Transverse colon (tissue), 4 donors: ENCODE measurements at regions of chr7 and their contacts with region 1.

Region 1: GRCh38 chr7:135558337-135558767 is 635 bp downstream of the NUP205 start:
- DNase-seq: peak; percentile 59
- H3K4me3 ChIP-seq: peak overlapping the region; percentile 63 to 80 (median 75)
- H3K27ac ChIP-seq: peak overlapping the region; percentile 91 to 93 (median 92)
- H3K4me1 ChIP-seq: peaks cover 0 to 20% (median 7%) of the 10 kb centered on the region in 4 donors
- H3K27me3 ChIP-seq: no peaks in the 10 kb centered on the region
- CTCF ChIP-seq: peak; percentile 33 to 41 (median 38)
- EP300 ChIP-seq: no peak
- POLR2A ChIP-seq: no peak

Region 2: DNA sequence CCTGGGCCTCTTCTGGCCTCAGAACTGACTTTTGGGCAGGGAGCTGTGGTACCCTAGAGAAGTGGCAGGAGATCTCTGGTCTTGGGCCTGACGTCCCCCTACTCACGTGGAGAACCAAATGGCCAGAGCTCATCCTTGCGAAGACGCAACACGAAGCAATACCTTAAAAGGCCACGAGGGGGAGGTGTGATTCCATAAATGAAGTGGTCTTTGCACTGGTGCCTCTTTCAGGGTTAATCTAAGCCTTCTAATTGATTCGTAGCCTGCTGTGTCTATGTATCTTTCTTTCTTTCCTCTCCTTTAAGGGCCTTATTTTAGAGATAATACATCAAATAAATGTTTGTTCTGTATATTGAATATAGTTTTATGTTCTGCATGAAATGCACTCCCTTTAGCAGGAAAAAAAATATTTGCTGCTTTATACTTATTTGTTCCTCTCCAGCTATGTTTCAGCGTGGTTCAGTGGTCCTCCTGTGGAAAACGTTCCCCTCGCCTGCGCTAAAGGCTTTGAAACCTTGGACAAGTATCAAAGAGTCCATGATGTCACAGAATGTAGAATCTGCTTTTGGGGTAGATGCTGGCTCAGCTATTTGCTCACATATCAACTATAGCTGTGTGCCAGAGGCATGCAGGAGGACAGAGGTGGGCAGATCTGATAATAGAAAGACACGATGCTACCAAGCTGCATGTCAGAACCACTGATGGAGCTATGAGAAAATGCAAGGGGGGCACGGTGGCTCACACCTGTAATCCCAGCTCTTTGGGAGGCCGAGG is 283.7 kb before region 1 on chr7:
- in situ Hi-C with region 1: loop called in 3 of 4 experiments (anchors 10 to 25 kb)
- intact Hi-C with region 1: no loop called
- DNase-seq: peak; percentile 73
- H3K4me3 ChIP-seq: no peak overlapping the region
- H3K27ac ChIP-seq: no peak overlapping the region
- H3K4me1 ChIP-seq: no peaks in the 10 kb centered on the region
- H3K27me3 ChIP-seq: peaks cover 9% of the 10 kb centered on the region
- CTCF ChIP-seq: peak; percentile 80 to 88 (median 86)
- EP300 ChIP-seq: no peak
- POLR2A ChIP-seq: no peak

Region 3: DNA sequence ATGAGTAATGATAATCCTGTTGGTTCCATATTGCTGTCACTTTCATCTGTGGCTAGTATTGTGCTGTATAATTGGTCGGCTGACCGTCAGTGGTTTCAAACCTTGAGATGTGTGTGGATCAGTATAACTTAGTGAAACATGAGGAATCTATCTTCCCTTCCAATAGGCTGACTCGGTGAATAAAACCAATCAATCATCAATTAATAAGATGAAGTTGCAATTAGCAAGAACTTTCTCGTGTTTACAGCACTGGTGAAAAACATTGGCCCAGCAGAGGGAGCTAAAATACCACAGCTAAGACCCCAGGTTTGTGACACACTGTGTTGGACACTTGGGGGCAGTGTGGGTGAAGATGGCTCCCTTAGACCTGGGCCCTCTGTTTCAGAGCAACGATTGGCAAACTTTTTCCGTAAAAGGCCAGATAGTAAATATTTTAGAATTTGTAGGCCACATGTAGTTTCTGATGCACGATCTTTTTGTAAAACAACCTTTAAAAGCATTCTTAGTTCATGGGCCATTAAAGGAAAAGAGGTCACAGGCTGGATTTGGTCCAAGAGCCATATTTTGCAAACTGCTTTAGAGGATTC is 276.9 kb before region 1 on chr7:
- in situ Hi-C with region 1: loop called in 3 of 4 experiments (anchors 10 to 25 kb)
- intact Hi-C with region 1: loop called (anchors 5 kb)
- DNase-seq: peak; percentile 82
- H3K4me3 ChIP-seq: no peak overlapping the region
- H3K27ac ChIP-seq: no peak overlapping the region
- H3K4me1 ChIP-seq: peaks cover 0 to 9% (median 3%) of the 10 kb centered on the region in 4 donors
- H3K27me3 ChIP-seq: peaks cover 18% of the 10 kb centered on the region
- CTCF ChIP-seq: peak; percentile 82 to 97 (median 87)
- EP300 ChIP-seq: no peak
- POLR2A ChIP-seq: no peak

Region 4: DNA sequence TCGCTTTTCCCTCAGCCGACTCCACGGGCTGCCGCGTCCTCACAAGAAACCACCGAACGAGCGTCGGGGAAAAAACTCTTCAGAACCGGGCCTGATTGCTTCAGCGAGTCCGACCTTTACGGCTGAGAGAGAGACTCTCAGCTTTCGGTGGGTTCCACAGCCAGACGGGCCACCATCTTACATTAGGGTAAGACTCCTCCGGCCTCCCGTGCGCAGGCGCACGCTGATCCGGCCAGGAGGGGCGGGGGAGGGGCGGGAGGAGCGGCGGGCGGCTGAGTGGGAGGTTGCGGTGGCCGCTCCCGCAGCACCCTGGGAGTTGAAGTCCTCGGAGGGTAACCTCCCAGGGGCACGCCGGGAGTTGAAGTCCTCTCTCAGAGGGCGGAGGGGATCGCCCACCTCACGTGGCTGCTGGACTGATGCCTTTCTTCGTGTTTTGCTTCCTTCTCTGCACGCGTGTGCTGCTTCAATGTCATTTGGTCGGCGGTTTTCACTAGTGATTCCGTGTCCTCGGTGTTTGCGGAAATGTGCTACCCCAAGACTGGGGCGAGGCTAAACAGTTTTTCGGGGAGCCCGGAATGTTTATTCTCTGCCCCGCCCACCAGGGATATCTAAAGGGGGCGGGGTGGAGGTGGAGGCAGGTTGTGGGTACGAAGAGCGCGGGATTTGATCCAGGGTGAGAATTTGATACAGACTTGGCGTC is 48.3 kb before region 1 on chr7 and contains the start of gene CNOT4:
- in situ Hi-C with region 1: loop called in 1 of 4 experiments (anchors 5 kb)
- intact Hi-C with region 1: loop called (anchors 2 kb)
- DNase-seq: peak; percentile 98
- H3K4me3 ChIP-seq: peak within 1 kb of the TSS; percentile 66 to 94 (median 84)
- H3K27ac ChIP-seq: peak within 1 kb of the TSS; percentile 91 to 97 (median 95)
- H3K4me1 ChIP-seq: peaks cover 9 to 32% (median 23%) of the 10 kb centered on the region in 4 donors
- H3K27me3 ChIP-seq: no peaks in the 10 kb centered on the region
- CTCF ChIP-seq: no peak
- EP300 ChIP-seq: no peak
- POLR2A ChIP-seq: peak; percentile 71
- total RNA-seq, gene CNOT4: 18.4 to 82.2 (median 29.9) TPM